ENCODE measurements at regions of chr15 and their contacts with region 1.

Region 1: DNA sequence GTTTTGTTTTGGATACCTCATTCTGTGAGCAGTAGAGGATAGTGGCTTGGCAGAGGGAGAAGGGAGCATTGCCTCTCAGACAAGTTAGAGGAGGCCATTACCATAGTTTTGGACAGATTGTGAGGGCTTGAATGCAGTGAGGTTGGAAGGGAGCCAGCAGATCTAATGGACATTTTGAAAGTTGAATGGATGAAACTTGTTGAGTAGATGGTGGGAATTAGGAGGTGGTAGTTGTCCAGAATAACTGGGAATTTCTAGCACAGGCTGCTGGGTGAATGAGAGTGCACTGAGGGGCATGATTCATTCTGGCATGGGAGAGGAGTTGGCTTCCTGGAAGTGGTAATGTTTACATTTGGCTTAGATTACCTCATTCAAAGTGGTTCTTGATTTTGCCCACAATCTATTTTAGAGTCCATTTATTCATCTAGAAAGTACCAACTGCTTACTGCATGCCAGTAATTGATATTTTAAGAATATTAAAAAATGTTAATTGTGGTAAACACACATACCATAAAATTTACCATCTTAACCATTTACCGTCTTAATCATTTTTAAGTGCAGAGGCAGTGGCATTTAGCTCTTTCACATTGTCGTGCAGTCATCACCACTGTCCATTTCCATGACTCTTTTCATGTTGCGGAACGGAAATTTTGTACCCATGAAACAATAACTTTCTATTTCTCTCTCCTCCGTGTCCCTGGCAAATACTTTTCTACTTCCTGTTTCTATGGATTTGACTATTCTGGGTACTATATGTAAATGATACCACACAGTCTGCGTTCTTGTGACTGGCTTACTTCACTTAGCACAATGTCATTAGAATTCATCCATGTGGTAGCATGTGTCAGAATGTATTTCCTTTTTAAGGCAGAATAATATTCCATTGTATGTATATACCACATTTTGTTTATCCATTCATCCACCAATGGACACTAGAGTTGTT is 27.7 kb downstream of the AKAP13 start:
- DNase-seq: peak; percentile 55
- ATAC-seq: peak; percentile 71
- H3K4me3 Mint-ChIP-seq: peak overlapping the region; percentile 12
- H3K27ac Mint-ChIP-seq: peak overlapping the region; percentile 84
- H3K4me1 Mint-ChIP-seq: peaks cover 79% of the 10 kb centered on the region
- H3K27me3 Mint-ChIP-seq: no peaks in the 10 kb centered on the region
- CTCF ChIP-seq: no peak

Region 2: DNA sequence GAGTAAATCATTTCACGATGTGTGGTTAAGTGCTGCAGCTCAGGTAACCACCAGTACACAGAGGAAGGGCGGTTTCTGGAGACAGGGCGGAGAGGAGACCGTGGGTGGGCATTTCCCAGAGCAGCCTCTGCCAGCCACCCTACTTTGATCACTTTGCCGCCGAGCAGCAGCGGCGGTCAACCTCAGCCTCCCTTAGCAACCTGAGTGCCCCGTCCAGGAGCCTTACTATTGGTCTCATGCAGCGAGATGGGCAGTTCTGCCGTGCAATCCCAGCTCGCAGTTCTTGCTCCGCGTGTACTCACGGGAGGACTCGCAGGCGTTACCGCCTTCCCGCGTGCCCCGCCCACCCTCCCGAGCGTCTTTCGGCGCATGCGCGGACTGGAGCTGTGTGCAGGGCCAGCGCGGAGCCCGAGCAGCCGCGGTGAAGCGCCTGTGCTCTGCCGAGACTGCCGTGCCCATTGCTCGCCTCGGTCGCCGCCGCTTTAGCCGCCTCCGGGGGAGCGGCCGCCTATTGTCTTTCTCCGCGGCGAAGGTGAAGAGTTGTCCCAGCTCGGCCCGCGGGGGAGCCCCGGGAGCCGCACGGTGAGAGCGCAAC is 27.8 kb before region 1 on chr15 and contains the start of gene AKAP13:
- CTCF ChIA-PET with region 1: interaction called, 18 read pairs
- POLR2A ChIA-PET with region 1: interaction called, 8 read pairs
- intact Hi-C with region 1: no loop called
- DNase-seq: peak; percentile 98
- ATAC-seq: peak; percentile 89
- H3K4me3 Mint-ChIP-seq: peak within 1 kb of the TSS; percentile 83
- H3K27ac Mint-ChIP-seq: peak within 1 kb of the TSS; percentile 90
- H3K4me1 Mint-ChIP-seq: peaks cover 42% of the 10 kb centered on the region
- H3K27me3 Mint-ChIP-seq: no peaks in the 10 kb centered on the region
- CTCF ChIP-seq: no peak
- total RNA-seq, gene AKAP13: 79.1 to 79.5 TPM

Region 3: GRCh38 chr15:85639752-85640381 is 231.8 kb after region 1 on chr15:
- CTCF ChIA-PET with region 1: no interaction called
- POLR2A ChIA-PET with region 1: no interaction called
- intact Hi-C with region 1: no loop called
- DNase-seq: no peak
- ATAC-seq: peak; percentile 91
- H3K4me3 Mint-ChIP-seq: no peak overlapping the region
- H3K27ac Mint-ChIP-seq: peak overlapping the region; percentile 78
- H3K4me1 Mint-ChIP-seq: peaks cover 32% of the 10 kb centered on the region
- H3K27me3 Mint-ChIP-seq: no peaks in the 10 kb centered on the region
- CTCF ChIP-seq: no peak

Measured in activated CD8-positive, alpha-beta T cell treated with anti-CD3 and anti-CD28 coated beads for 36 hours (primary cell).